ENCODE measurements at regions of chr13 and their contacts with region 1.

Region 1: GRCh38 chr13:113393563-113394338 is 29.8 kb upstream of the GRTP1 start:
- DNase-seq: peak; percentile 88
- H3K4me3 Mint-ChIP-seq: peak overlapping the region; percentile 90
- H3K27ac Mint-ChIP-seq: no peak overlapping the region
- H3K4me1 Mint-ChIP-seq: peaks cover 4% of the 10 kb centered on the region
- H3K27me3 Mint-ChIP-seq: no peaks in the 10 kb centered on the region

Region 2: DNA sequence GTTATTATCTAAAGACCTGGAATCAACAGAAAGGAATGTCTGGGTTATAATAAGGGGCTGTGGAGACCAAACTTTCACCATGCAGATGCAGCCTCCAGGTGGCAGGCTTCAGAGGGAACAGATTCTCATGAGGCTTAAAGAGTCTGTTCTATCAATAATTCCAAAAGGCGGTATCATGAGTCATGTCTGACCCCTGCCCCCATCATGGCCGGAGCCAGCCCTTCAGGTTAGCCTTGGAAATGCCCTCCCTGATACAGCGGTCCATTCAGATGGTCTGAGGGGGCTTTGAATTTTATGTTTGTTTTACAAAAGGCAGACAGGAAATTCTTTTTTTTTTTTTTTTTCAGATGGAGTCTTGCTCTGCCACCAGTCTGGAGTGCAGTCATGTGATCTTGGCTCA is 118.4 kb before region 1 on chr13:
- CTCF ChIA-PET with region 1: interaction called, 4 read pairs
- POLR2A ChIA-PET with region 1: no interaction called
- intact Hi-C with region 1: loop called (anchors 2 kb)
- DNase-seq: peak; percentile 43
- H3K4me3 Mint-ChIP-seq: no peak overlapping the region
- H3K27ac Mint-ChIP-seq: no peak overlapping the region
- H3K4me1 Mint-ChIP-seq: no peaks in the 10 kb centered on the region
- H3K27me3 Mint-ChIP-seq: no peaks in the 10 kb centered on the region